ENCODE measurements at regions of chr12 and their contacts with region 1.

Region 1: DNA sequence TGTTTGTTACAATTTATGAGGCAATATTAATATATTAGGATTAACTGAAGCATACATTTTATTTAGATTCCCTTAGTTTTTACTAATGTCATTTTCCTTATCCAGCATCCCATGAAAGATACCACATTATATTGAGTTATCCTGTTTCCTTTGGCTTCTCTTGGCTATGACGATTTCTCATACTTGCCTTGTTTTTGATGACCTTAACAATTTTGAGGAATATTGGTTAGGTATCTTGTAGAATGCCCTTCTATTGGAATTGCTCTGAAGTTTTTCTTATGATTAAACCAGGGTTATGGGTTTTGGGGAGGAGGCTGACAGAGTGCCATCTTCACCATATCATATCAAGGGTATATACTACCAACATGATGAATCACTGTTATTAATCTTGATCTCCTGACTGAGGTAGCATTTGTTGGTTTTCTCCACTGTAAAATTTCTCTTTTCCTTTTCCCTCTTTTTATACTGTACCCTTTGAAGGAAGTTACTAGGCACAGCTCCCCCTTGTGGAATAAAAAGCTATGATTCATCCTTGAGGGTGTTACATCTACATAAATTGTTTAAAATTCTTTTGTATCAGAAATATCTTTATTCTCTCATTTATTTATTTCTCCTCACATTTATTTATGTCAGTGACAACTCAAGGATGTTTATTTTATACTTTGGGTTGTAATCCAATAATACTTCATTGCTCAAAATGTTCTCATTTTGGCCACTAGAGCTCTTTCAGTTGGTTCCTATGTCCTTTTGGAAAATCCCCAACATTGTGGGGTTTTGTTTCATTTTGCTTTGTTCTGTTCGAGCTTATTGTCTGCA is 239.0 kb downstream of the SLC16A7 start:
- DNase-seq: no peak
- ATAC-seq: no peak
- H3K4me3 ChIP-seq: no peak overlapping the region
- H3K27ac ChIP-seq: no peak overlapping the region
- H3K4me1 ChIP-seq: no peaks in the 10 kb centered on the region
- H3K27me3 ChIP-seq: no peaks in the 10 kb centered on the region
- CTCF ChIP-seq: peak; percentile 32 to 69 (median 58)
- POLR2A ChIP-seq: no peak

Region 2: GRCh38 chr12:59403259-59403932 is 431.5 kb before region 1 on chr12:
- intact Hi-C with region 1: loop called in 2 of 10 experiments (anchors 5 to 10 kb)
- DNase-seq: peak in 2 of 5 donors; percentile 22 to 32
- ATAC-seq: peak in 3 of 4 donors; percentile 65 to 88 (median 68)
- H3K4me3 ChIP-seq: peak overlapping the region in 3 of 12 donors; percentile 13 to 35 (median 16)
- H3K27ac ChIP-seq: no peak overlapping the region
- H3K4me1 ChIP-seq: peaks cover 0 to 5% (median 0%) of the 10 kb centered on the region in 12 donors
- H3K27me3 ChIP-seq: no peaks in the 10 kb centered on the region
- CTCF ChIP-seq: peak; percentile 62 to 82 (median 71)
- POLR2A ChIP-seq: no peak

Region 3: DNA sequence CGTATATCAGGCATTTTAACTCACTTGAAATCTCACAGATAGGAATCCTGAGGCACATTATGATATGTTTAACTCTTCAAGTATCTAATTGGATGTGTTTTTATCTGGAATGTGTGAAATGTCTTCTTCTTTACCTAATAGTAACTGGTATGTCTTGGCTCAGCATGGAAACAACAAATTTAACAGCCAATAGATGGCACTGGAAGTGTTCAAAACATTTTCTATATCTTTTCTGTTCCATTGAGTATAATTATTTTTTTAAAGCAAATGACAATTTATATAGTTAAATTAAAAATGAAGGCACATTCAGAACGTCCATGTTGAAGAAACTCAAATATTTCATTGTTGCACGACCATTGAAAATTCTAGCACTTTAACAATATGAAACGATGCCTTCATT is 403.6 kb before region 1 on chr12:
- intact Hi-C with region 1: loop called in 2 of 10 experiments (anchors 5 to 10 kb)
- DNase-seq: no peak
- ATAC-seq: no peak
- H3K4me3 ChIP-seq: no peak overlapping the region
- H3K27ac ChIP-seq: no peak overlapping the region
- H3K4me1 ChIP-seq: no peaks in the 10 kb centered on the region
- H3K27me3 ChIP-seq: no peaks in the 10 kb centered on the region
- CTCF ChIP-seq: peak in 6 of 12 donors; percentile 21 to 35 (median 28)
- POLR2A ChIP-seq: no peak

Region 4: GRCh38 chr12:59444932-59445331 is 389.9 kb before region 1 on chr12:
- intact Hi-C with region 1: loop called in 5 of 10 experiments (anchors 10 kb)
- DNase-seq: no peak
- ATAC-seq: no peak
- H3K4me3 ChIP-seq: no peak overlapping the region
- H3K27ac ChIP-seq: no peak overlapping the region
- H3K4me1 ChIP-seq: no peaks in the 10 kb centered on the region
- H3K27me3 ChIP-seq: no peaks in the 10 kb centered on the region
- CTCF ChIP-seq: peak in 10 of 12 donors; percentile 13 to 50 (median 41)
- POLR2A ChIP-seq: no peak